Calu3 (cell line): ENCODE measurements at regions of chr14 and their contacts with region 1.

Region 1: DNA sequence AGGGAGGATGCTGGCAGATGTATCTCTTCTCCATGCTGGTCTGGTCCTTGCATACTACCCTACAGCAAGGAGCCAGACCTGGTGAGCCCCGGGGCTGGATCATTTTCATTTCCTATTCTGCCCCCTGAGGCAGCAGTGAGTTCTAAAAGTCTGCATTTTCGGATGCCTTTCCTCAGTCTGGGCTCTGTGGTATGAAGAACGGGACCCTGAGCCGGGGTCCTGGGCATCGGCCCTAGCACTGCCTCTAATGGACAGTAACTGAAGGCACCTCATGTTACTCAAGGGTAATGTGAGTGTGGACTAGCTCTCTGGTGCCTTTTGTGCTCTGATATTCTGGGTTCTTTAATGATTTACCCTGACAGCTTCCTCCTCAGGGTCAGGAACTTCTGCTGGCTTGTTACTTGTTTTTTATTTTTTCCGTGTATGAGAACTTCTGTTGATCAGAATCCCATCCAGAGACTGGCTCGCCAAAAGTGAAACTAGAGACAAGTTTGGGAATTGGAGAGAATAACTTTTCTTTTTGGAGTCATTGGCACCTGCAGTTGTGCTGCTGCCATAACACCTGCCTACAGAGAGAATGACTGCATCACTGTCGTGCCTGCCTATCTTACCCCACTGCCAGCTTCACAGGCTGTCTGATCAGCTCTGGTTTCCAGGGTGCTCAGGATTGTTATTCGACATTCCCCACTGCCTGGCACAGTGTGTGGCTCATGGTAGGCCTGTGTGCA is 62.3 kb downstream of the SUSD6 start:
- DNase-seq: peak; percentile 23
- H3K4me3 Mint-ChIP-seq: peak overlapping the region; percentile 3
- H3K27ac Mint-ChIP-seq: peak overlapping the region; percentile 4
- H3K4me1 Mint-ChIP-seq: peaks cover 57% of the 10 kb centered on the region
- H3K27me3 Mint-ChIP-seq: no peaks in the 10 kb centered on the region
- CTCF ChIP-seq: no peak

Region 2: DNA sequence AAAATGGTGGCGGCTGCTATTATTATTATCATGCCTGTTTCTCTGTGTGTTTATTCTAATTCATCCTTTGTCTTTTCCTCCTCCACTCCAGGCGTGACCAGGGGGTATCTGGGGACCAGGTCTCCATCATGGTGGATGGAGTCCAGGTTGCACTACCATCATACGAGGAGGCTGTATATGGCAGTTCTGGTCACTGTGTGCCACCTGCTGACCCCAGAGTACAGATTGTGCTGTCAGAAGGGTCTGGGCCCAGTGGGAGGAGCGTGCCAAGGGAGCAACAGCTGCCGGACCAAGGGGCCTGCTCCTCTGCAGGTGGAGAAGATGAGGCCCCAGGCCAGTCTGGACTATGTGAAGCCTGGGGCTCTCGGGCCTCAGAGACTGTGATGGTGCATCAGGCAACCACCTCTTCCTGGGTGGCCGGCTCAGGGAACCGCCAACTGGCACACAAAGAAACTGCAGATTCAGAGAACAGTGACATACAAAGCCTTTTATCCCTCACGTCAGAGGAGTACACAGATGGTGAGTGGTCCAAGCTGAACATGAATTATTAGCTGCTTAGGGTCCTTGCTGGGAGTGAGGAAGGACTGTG is 34.9 kb after region 1 on chr14:
- CTCF ChIA-PET with region 1: no interaction called
- intact Hi-C with region 1: loop called (anchors 5 kb)
- DNase-seq: peak; percentile 50
- H3K4me3 Mint-ChIP-seq: no peak overlapping the region
- H3K27ac Mint-ChIP-seq: no peak overlapping the region
- H3K4me1 Mint-ChIP-seq: no peaks in the 10 kb centered on the region
- H3K27me3 Mint-ChIP-seq: no peaks in the 10 kb centered on the region
- CTCF ChIP-seq: peak; percentile 26